GM12878 (cell line): ENCODE measurements at regions of chr6 and their contacts with region 1.

Region 1: GRCh38 chr6:139161817-139162284 is 27.0 kb downstream of the HECA start:
- DNase-seq: peak; percentile 91
- ATAC-seq: peak; percentile 97
- H3K4me3 ChIP-seq: no peak overlapping the region
- H3K27ac ChIP-seq: peak overlapping the region; percentile 48
- H3K4me1 ChIP-seq: peaks cover 19% of the 10 kb centered on the region
- H3K27me3 ChIP-seq: no peaks in the 10 kb centered on the region
- CTCF ChIP-seq: no peak
- EP300 ChIP-seq: peak; percentile 66 to 75
- POLR2A ChIP-seq: no peak
- RAD21 ChIP-seq: peak; percentile 24; the same call in 1 of the 2 replicates

Region 2: DNA sequence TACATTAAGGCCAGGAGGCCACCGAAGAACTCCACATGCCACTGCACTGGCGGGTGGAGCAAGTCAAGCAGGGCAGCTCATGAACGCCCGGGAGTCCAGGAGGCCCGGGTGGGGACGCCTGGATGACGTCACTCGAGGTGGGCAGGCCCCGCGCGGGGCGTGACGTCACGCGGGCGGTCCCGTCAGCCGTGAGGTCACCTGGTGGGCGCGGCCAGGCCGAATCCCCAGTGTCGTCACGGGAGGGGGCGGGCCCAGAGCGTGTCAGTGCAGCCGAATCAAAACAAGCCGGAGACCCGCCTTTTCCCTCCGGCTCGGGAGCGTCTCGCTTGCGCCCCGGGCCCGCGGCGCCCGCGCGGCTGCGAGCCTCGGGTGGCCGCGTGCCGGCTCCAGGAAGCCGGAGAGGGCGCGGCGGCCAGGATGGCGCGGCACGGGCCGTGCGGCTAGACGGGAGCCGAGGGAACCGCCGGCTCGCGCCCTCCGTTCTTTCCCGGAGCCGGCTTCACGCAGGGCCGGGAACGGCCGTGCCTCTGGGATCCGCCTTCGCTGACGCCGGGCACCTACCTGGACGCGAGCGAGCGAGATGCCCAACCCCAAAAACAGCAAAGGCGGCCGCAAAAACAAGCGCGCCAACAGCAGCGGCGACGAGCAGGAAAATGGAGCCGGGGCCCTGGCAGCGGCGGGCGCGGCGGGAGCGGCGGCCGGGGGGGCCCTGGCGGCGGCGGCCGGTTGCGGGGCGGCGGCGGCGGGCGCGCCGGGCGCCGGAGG is 26.9 kb before region 1 on chr6 and contains the start of gene HECA:
- CTCF ChIA-PET with region 1: interaction called, 4 read pairs
- POLR2A ChIA-PET with region 1: no interaction called
- RAD21 ChIA-PET with region 1: interaction called, 4 read pairs
- SMC1A ChIA-PET with region 1: interaction called, 12 read pairs
- in situ Hi-C with region 1: no loop called
- intact Hi-C with region 1: loop called (anchors 2 kb)
- DNase-seq: no peak
- ATAC-seq: peak; percentile 76
- H3K4me3 ChIP-seq: peak within 1 kb of the TSS; percentile 87
- H3K27ac ChIP-seq: peak within 1 kb of the TSS; percentile 35
- H3K4me1 ChIP-seq: peaks cover 6% of the 10 kb centered on the region
- H3K27me3 ChIP-seq: no peaks in the 10 kb centered on the region
- CTCF ChIP-seq: no peak
- EP300 ChIP-seq: no peak
- POLR2A ChIP-seq: peak; percentile 70
- RAD21 ChIP-seq: no peak
- polyA plus RNA-seq, gene HECA: 0.64 to 0.82 TPM

Region 3: DNA sequence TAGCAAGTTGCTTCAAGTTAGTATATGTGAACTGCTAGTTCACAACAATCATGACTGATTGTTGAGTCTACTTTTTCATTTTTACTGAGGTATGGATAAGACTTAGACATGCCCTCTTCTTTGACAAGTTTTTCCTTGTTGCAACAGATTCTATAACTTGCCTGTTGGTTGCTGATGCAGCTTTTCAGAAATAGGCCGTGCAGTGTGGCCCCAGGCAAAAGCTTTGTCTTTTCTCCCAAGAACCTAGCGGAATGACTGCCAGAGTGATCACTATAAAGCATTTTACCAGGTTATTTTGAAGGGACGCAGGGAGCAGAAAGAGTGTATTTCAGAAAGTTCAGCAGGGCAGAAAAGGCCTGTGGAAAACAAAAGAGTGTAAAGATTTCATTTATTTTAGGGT is 10.9 kb before region 1 on chr6:
- CTCF ChIA-PET with region 1: interaction called, 3 read pairs
- POLR2A ChIA-PET with region 1: no interaction called
- RAD21 ChIA-PET with region 1: interaction called, 4 read pairs
- SMC1A ChIA-PET with region 1: interaction called, 3 read pairs
- in situ Hi-C with region 1: no loop called
- intact Hi-C with region 1: loop called (anchors 1 kb)
- DNase-seq: no peak
- ATAC-seq: no peak
- H3K4me3 ChIP-seq: no peak overlapping the region
- H3K27ac ChIP-seq: no peak overlapping the region
- H3K4me1 ChIP-seq: no peaks in the 10 kb centered on the region
- H3K27me3 ChIP-seq: no peaks in the 10 kb centered on the region
- CTCF ChIP-seq: no peak
- EP300 ChIP-seq: no peak
- POLR2A ChIP-seq: no peak
- RAD21 ChIP-seq: no peak